Caco-2 (cell line): ENCODE measurements at regions of chr12 and their contacts with region 1.

Region 1: GRCh38 chr12:4975574-4975973 is 65.9 kb downstream of the KCNA1 start:
- DNase-seq: no peak
- H3K4me3 ChIP-seq: no peak overlapping the region
- H3K4me3 Mint-ChIP-seq: no peak overlapping the region
- H3K27ac Mint-ChIP-seq: no peak overlapping the region
- H3K4me1 ChIP-seq: peaks cover 6% of the 10 kb centered on the region
- H3K4me1 Mint-ChIP-seq: peaks cover 11% of the 10 kb centered on the region
- H3K27me3 ChIP-seq: no peaks in the 10 kb centered on the region; the same call in 1 of the 2 replicates
- H3K27me3 Mint-ChIP-seq: peaks cover 22% of the 10 kb centered on the region
- CTCF ChIP-seq: no peak

Region 2: GRCh38 chr12:4849115-4849541 is 126.4 kb before region 1 on chr12:
- CTCF ChIA-PET with region 1: no interaction called
- POLR2A ChIA-PET with region 1: interaction called, 11 read pairs
- intact Hi-C with region 1: no loop called
- DNase-seq: peak in 1 of 2 experiments; percentile 22
- H3K4me3 ChIP-seq: no peak overlapping the region
- H3K4me3 Mint-ChIP-seq: no peak overlapping the region
- H3K27ac Mint-ChIP-seq: no peak overlapping the region
- H3K4me1 ChIP-seq: no peaks in the 10 kb centered on the region
- H3K4me1 Mint-ChIP-seq: no peaks in the 10 kb centered on the region
- H3K27me3 ChIP-seq: no peaks in the 10 kb centered on the region; the same call in 1 of the 2 replicates
- H3K27me3 Mint-ChIP-seq: peaks cover 26% of the 10 kb centered on the region
- CTCF ChIP-seq: peak; percentile 79 to 93